ENCODE measurements at regions of chr12 and their contacts with region 1.

Region 1: DNA sequence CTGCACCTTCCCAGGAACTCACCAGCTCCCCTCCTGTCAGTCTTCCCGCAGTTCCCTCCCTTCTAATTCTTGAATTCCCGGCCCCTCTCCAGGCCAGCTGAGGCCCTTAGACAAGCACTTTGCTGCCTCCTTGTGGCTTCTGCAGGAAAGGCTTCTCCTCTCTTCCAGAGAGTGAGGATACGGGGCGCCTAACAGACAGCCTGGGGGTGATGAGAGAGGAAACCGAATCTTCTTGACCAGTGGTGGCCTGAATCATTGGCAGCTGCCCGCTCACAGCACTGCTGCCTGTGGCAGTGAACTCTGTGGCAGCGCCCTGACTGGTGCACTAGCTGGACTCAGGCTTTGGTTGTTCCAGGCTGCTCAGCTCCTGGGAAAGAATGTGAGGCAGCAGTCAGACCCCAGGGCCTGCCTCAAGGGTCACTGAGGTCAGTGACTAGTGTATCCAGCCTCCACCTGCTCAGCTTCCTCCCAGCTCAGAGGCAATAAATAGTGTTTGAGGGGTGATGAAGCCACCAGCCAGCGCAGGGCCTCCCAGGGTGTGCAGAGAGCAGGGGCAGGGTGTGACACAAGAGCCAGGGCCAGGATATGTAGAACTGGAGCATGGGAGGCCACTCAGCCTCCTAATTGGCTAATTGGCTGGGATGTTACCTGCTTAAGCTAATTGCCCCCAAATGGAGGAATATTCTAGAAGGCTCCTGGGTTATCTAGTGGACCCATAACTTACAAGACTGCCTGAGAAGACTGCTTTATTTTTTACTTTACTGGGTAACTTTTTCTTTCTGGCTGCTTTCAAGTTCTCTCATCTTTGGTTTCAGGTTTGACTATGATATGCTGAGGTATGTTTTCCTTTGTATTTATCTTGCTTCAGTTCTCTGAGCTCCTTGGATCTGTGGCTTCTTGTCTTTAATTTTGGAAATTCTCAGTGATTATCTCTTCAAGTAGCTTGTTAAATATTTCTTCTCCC is 12.9 kb upstream of the MCRS1 start:
- DNase-seq: peak; percentile 83
- ATAC-seq: peak; percentile 97
- H3K4me3 ChIP-seq: no peak overlapping the region
- H3K27ac ChIP-seq: no peak overlapping the region
- H3K4me1 ChIP-seq: peaks cover 25% of the 10 kb centered on the region
- H3K27me3 ChIP-seq: no peaks in the 10 kb centered on the region
- CTCF ChIP-seq: peak; percentile 96
- EP300 ChIP-seq: no peak
- POLR2A ChIP-seq: no peak
- RAD21 ChIP-seq: peak; percentile 81

Region 2: DNA sequence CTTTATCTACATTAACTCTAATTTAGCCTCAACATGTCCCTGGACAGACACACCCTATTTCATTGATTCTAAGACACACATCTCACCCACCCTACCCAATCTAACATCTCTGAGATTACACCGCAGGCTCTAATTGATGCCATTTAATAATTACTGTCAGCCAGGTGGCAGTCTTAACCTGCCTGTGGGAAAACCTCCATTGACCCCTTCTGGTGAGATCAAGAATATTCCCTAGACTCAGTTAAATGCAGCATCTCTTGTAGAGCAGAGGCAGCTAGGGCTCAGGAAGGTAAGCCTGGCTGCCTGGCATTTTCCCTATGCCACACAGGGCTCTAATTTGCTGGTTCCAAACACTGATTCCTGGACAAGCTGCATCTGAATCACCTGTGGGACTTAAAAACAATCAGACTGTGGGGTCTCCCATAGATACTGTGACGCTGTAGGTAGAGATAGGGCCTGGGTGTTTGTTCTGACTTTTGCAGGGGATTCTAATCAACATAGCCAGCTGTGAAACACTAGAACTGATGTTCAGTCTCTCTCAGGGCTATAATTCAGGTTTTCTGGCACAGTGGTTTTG is 27.3 kb before region 1 on chr12:
- CTCF ChIA-PET with region 1: interaction called, 4 read pairs
- POLR2A ChIA-PET with region 1: interaction called, 4 read pairs
- in situ Hi-C with region 1: no loop called
- intact Hi-C with region 1: loop called (anchors 1 kb)
- DNase-seq: peak; percentile 58
- ATAC-seq: peak; percentile 58
- H3K4me3 ChIP-seq: no peak overlapping the region
- H3K27ac ChIP-seq: no peak overlapping the region
- H3K4me1 ChIP-seq: peaks cover 47% of the 10 kb centered on the region
- H3K27me3 ChIP-seq: no peaks in the 10 kb centered on the region
- CTCF ChIP-seq: peak; percentile 64
- EP300 ChIP-seq: no peak
- POLR2A ChIP-seq: no peak
- RAD21 ChIP-seq: no peak